ENCODE measurements at regions of chr19 and their contacts with region 1.

Region 1: DNA sequence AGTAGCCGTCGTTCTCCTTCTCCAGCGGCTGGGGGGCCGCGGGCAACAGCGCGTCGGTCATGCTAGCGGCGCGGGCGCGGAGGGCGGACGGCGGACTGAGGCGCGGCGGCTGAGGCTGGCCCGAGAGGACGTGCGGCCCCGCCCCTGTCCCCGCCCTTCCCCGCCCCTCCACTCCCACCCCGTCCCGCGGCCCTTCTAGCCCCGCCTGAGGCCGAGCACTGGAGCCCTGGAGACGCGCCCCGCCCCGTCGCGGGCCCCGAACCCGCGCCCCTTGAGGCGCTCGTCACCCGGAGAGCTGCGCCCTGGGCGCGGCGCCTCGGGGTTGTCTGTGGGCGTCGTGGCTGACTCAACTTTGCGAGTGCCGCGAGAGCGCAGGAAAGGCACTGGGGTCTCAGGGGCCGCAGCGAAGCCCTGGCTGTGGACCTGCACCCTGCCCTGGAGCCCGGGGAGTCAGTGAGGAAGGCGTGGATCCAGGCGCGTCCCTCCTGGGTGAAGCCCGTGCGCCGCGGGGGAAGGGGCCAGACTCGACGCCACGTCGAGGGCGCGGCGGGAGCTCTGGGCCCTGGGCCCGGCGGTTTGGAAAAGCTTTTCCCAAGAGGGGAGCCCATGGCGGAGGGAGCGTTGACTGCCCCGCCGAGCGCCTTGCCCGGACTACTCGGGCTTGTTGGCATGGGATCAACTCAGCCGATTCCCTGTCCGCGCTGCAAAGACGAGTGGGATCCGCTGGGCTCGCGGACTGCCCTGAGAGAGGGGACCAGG is at the start of gene RHPN2:
- DNase-seq: peak; percentile 68
- ATAC-seq: peak; percentile 88
- H3K4me3 ChIP-seq: peak within 1 kb of the TSS in 4 of 5 experiments; percentile 44 to 65 (median 56)
- H3K4me3 Mint-ChIP-seq: peak within 1 kb of the TSS; percentile 79
- H3K27ac ChIP-seq: no peak within 1 kb of the TSS
- H3K27ac Mint-ChIP-seq: peak within 1 kb of the TSS; percentile 61
- H3K4me1 ChIP-seq: peaks cover 15 to 20% of the 10 kb centered on the region in 2 donors
- H3K4me1 Mint-ChIP-seq: peaks cover 7% of the 10 kb centered on the region
- H3K27me3 ChIP-seq: peaks cover 0 to 22% (median 2%) of the 10 kb centered on the region in 4 experiments
- H3K27me3 Mint-ChIP-seq: peaks cover 7% of the 10 kb centered on the region
- CTCF ChIP-seq: no peak
- total RNA-seq, gene RHPN2: 5.2 and 5.5 TPM in 2 replicates

Region 2: DNA sequence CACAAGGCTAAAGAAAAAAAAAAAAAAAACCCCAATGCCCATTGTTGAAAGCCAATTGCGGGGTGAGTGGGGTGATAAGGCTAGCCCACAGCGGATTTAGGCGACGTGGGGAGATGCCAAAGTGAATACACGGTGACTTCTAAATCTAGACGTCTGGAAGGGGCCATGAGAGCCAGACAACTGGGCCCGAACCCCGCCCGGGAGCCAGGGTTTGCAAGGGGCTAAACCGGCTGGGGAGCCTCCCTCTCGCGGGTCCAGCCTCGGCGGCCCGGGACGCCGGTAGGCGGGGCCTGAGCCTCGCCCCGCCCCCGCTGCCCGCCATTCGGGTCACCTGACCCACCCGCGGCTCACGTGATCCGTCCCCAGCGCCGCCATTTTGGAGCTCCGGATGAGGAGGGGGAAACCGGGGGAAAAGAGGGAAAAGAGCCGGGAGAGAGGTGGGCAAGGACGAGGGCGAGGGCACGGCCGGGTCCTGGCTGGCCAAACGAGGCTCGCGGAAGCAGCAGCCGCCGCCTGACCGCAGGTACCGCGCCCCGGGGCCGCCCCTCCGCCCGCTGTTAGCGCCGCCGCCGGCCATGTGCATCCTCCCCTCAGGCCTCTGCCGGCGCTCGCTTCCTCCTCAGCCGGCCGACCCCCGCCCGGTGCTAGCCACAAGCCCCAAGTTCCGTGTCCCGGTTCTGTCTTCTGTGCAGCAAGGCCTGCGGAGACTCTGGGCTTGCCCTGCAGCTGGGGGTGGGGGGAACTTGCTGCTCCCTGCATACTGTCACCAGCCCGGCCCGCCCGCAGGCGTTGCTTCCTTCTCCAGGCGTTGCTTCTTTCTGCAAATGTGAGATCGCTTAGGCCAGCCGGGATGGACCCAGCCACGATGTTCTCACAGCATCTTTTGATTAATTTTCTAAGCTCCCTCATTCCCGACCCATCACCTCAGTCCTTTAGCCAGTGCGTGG is 719.4 kb before region 1 on chr19 and contains the start of gene ZNF507:
- CTCF ChIA-PET with region 1: no interaction called
- POLR2A ChIA-PET with region 1: no interaction called
- intact Hi-C with region 1: loop called (anchors 5 kb)
- DNase-seq: peak; percentile 91
- ATAC-seq: peak; percentile 90
- H3K4me3 ChIP-seq: peak within 1 kb of the TSS; percentile 83 to 97 (median 93)
- H3K4me3 Mint-ChIP-seq: peak within 1 kb of the TSS; percentile 97
- H3K27ac ChIP-seq: peak within 1 kb of the TSS; percentile 69 to 88
- H3K27ac Mint-ChIP-seq: peak within 1 kb of the TSS; percentile 94
- H3K4me1 ChIP-seq: peaks cover 23 to 28% of the 10 kb centered on the region in 2 donors
- H3K4me1 Mint-ChIP-seq: peaks cover 27% of the 10 kb centered on the region
- H3K27me3 ChIP-seq: peaks cover 0 to 6% (median 0%) of the 10 kb centered on the region in 4 experiments
- H3K27me3 Mint-ChIP-seq: no peaks in the 10 kb centered on the region
- CTCF ChIP-seq: no peak
- total RNA-seq, gene ZNF507: 38.6 and 40.5 TPM in 2 replicates

Region 3: DNA sequence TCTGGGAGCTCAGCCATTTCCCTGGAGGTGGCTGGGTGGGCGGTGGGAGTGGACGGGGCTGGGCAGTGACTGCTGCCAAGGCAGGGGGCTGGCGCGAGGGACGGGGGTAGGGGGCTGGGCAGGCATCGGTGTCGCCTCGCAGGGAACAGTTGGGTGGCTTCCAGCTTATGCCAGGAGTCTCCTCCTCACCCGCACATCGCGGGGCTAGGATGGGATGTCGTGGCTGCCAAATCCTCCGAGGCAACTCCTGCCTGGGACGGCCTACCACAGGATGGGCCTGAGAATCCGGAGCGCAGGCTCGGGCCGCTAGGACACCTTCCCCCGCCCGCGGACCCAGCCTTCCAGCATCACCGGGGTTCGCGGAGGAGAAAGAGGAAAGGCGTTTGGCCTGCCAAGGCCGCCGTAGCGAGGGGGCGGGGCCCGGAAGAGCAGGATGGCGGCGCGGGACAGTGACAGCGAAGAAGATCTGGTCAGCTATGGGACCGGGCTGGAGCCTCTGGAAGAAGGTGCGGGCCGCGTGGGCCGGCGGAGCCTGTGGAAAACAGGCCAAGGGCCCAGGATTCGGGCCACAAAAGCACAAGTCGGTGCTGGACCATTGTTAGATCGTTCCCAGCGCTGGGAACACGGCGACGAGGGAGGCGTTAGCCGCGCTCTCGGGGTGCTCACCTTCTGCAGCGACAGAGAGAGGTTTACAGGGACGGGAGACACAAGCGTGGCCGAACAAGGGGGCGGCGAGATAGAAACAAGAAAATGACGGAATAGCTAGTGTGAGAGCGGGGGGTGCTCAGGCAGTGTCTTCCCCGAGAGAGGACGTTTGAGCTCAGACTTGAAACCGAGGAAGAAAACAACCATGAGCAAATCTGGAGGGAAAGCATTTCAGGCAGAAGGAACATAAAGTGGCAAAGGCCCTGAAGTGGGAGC is 16.1 kb after region 1 on chr19 and contains the start of gene GPATCH1:
- CTCF ChIA-PET with region 1: interaction called, 3 read pairs
- POLR2A ChIA-PET with region 1: interaction called, 9 read pairs
- intact Hi-C with region 1: loop called (anchors 1 kb)
- DNase-seq: peak; percentile 89
- ATAC-seq: peak; percentile 97
- H3K4me3 ChIP-seq: peak within 1 kb of the TSS; percentile 75 to 98 (median 90)
- H3K4me3 Mint-ChIP-seq: peak within 1 kb of the TSS; percentile 93
- H3K27ac ChIP-seq: peak within 1 kb of the TSS; percentile 62 to 85
- H3K27ac Mint-ChIP-seq: peak within 1 kb of the TSS; percentile 93
- H3K4me1 ChIP-seq: peaks cover 9 to 15% of the 10 kb centered on the region in 2 donors
- H3K4me1 Mint-ChIP-seq: peaks cover 19% of the 10 kb centered on the region
- H3K27me3 ChIP-seq: no peaks in the 10 kb centered on the region
- H3K27me3 Mint-ChIP-seq: no peaks in the 10 kb centered on the region
- CTCF ChIP-seq: no peak
- total RNA-seq, gene GPATCH1: 14.6 and 16.9 TPM in 2 replicates